Activated CD4-positive, alpha-beta T cell treated with anti-CD3 and anti-CD28 coated beads for 36 hours (primary cell): ENCODE measurements at regions of chr17 and their contacts with region 1.

Region 1: DNA sequence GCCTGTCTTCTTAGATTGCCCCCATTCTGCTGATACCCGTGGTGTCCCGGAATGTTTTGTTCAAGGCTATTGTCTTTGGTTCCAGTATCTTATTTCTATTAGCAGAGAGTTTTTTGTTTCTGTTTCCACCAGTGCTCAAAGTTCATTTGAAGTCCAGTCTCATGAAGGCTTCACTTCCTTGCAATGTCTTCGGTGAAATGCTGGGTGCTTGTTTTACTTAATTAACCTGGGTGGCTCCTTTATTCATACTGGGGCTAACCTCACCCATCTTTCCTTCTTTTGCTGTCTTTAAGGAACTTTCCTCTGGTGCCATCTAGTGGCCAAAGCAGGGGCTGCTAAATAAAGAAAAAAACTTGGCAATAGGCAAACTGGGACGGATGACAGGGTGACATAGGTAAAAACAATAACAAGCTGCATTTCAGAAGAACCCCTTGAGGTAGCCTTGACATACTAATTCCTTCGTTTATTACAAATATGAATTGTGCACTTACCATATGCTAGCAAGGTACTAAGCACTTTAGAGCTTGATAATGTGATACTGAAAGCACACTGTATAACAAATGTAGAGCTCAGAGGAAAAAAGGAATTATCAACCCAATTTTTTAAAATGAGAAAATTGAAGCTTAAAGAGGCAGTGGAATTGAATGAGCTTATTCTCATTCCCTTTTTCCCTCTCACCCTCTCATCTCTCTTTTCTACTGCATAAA is 2.8 kb upstream of the SMIM36 start:
- DNase-seq: peak; percentile 77
- ATAC-seq: peak; percentile 66
- H3K4me3 Mint-ChIP-seq: no peak overlapping the region
- H3K27ac Mint-ChIP-seq: no peak overlapping the region
- H3K4me1 Mint-ChIP-seq: no peaks in the 10 kb centered on the region
- H3K27me3 Mint-ChIP-seq: peaks cover 2% of the 10 kb centered on the region

Region 2: DNA sequence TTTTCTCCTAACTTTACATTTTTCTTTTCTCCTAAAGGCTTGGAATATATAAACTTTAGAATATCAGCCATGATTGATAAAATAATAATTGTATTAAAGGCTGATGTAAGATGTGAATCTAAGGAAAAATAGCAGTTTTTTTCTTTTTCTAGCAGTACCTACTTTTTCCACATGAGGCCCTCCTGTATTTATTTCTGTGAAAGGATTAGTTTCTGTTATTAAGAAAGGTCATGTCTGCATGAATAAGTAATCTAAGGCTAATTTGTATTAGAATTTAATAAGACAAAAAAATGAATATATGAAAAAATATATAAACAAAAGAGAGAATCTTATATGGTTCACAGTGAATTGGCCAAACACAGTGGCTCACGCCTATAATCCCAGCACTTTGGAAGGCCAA is 460.2 kb before region 1 on chr17:
- CTCF ChIA-PET with region 1: no interaction called
- POLR2A ChIA-PET with region 1: no interaction called
- intact Hi-C with region 1: no loop called
- DNase-seq: no peak
- ATAC-seq: no peak
- H3K4me3 Mint-ChIP-seq: no peak overlapping the region
- H3K27ac Mint-ChIP-seq: no peak overlapping the region
- H3K4me1 Mint-ChIP-seq: no peaks in the 10 kb centered on the region
- H3K27me3 Mint-ChIP-seq: no peaks in the 10 kb centered on the region

Region 3: GRCh38 chr17:55356434-55357328 is 157.4 kb before region 1 on chr17:
- CTCF ChIA-PET with region 1: interaction called, 7 read pairs
- POLR2A ChIA-PET with region 1: no interaction called
- intact Hi-C with region 1: loop called (anchors 1 to 5 kb)
- DNase-seq: peak; percentile 83
- ATAC-seq: peak; percentile 94
- H3K4me3 Mint-ChIP-seq: no peak overlapping the region
- H3K27ac Mint-ChIP-seq: no peak overlapping the region
- H3K4me1 Mint-ChIP-seq: peaks cover 2% of the 10 kb centered on the region
- H3K27me3 Mint-ChIP-seq: peaks cover 8% of the 10 kb centered on the region

Region 4: GRCh38 chr17:55487695-55488429 is 26.2 kb before region 1 on chr17:
- CTCF ChIA-PET with region 1: no interaction called
- POLR2A ChIA-PET with region 1: no interaction called
- intact Hi-C with region 1: no loop called
- DNase-seq: no peak
- ATAC-seq: no peak
- H3K4me3 Mint-ChIP-seq: no peak overlapping the region
- H3K27ac Mint-ChIP-seq: no peak overlapping the region
- H3K4me1 Mint-ChIP-seq: no peaks in the 10 kb centered on the region
- H3K27me3 Mint-ChIP-seq: peaks cover 14% of the 10 kb centered on the region